Heart right ventricle (tissue), 16 donors: ENCODE measurements at regions of chr6 and their contacts with region 1.

Region 1: GRCh38 chr6:1761477-1761877 is 151.8 kb downstream of the FOXC1 start:
- DNase-seq: no peak
- ATAC-seq: no peak
- H3K4me3 ChIP-seq: no peak overlapping the region
- H3K27ac ChIP-seq: no peak overlapping the region
- H3K4me1 ChIP-seq: peaks cover 0 to 26% (median 11%) of the 10 kb centered on the region in 9 donors
- H3K27me3 ChIP-seq: no peaks in the 10 kb centered on the region
- CTCF ChIP-seq: no peak

Region 2: DNA sequence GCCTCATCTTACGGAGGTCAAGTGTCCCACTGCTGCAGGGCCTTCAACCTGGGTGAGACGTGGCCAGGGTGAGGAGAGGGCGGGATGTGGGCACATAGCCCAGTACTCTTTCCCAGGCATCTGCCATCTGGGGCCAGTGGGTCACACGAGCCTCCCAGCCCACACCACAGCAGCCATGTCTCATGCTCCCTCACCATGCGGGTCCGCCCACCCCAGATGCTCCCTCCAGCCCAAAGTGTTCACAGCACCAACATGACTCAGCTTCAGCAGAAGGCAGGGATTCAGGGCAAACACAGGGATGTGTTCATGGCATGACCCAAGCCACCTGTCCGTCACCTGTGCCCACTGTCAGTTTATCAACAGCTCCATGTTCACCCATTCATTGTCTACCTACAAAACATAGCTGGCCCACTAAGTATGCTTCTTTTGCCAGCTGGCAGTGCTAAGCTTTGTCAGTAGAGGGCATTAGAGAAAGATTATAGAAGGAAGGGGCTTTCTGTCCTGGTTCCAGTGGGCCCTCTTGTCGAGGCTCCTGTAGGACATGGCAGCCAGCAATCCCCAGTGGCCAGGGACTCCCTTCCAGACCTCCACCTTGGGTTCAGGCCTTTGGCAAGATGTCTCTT is 262.9 kb before region 1 on chr6:
- intact Hi-C with region 1: no loop called
- DNase-seq: no peak
- ATAC-seq: no peak
- H3K4me3 ChIP-seq: no peak overlapping the region
- H3K27ac ChIP-seq: no peak overlapping the region
- H3K4me1 ChIP-seq: peaks cover 0 to 9% (median 0%) of the 10 kb centered on the region in 9 donors
- H3K27me3 ChIP-seq: peaks cover 0 to 14% (median 0%) of the 10 kb centered on the region in 7 donors
- CTCF ChIP-seq: no peak

Region 3: GRCh38 chr6:1701668-1702353 is 59.7 kb before region 1 on chr6:
- intact Hi-C with region 1: loop called in 1 of 10 experiments (anchors 10 kb)
- DNase-seq: peak in 1 of 2 donors; percentile 31
- ATAC-seq: peak in 7 of 8 donors; percentile 24 to 76 (median 53)
- H3K4me3 ChIP-seq: no peak overlapping the region
- H3K27ac ChIP-seq: peak overlapping the region in 3 of 10 donors; percentile 29 to 62 (median 51)
- H3K4me1 ChIP-seq: peaks cover 0 to 30% (median 0%) of the 10 kb centered on the region in 9 donors
- H3K27me3 ChIP-seq: no peaks in the 10 kb centered on the region
- CTCF ChIP-seq: no peak

Region 4: DNA sequence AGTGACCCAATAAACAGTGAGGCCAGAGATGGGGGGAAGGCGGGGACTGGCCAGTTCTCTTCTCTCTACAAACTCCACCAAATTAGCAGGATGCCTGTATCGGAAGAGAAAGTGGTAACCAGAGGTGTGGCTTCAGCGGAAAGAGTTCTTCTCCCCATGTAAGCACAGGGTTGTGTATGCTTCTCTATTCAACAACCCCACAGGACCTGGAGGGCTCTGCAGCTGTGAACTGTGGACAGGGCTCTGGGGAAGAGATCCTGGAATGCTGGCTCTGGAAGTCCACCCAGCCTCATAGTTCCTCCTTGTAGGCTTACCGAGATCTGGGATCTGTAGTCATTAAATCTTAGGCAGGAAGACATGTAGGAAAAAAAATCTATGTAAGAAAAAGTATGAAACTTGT is 34.4 kb after region 1 on chr6:
- intact Hi-C with region 1: loop called in 2 of 10 experiments (anchors 2 to 5 kb)
- DNase-seq: no peak
- ATAC-seq: no peak
- H3K4me3 ChIP-seq: no peak overlapping the region
- H3K27ac ChIP-seq: no peak overlapping the region
- H3K4me1 ChIP-seq: peaks cover 0 to 17% (median 5%) of the 10 kb centered on the region in 9 donors
- H3K27me3 ChIP-seq: no peaks in the 10 kb centered on the region
- CTCF ChIP-seq: no peak

Region 5: DNA sequence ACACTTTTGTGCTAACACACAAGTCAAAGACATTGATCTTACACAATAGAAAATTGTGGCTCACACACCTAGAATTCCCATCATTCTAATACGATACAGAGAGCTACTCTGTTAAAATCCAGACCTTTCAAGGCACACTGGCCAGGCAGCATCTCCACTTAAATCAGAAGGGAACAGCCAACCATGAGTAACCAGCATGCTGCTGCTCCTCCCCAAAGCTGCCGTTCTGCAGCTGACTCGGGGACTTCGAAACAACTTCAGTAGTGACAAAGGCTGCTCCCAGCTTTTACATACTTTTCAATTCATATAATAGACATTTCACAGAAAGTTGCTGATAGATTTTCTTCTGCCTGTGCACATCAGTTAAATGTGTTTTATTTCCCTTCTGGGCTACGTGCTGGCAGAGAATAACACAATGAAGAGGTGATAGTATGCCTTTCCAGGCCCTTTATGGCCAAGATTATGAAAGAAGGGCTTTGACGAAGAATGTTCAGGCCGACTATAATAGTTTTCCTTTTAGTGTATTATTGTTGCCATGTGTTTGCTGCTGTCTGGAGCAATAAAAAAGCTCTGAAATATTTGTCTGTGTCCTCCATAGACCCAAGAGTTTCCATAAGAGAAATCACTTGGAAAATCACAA is 325.0 kb after region 1 on chr6:
- intact Hi-C with region 1: no loop called
- DNase-seq: no peak
- ATAC-seq: no peak
- H3K4me3 ChIP-seq: no peak overlapping the region
- H3K27ac ChIP-seq: no peak overlapping the region
- H3K4me1 ChIP-seq: no peaks in the 10 kb centered on the region
- H3K27me3 ChIP-seq: no peaks in the 10 kb centered on the region
- CTCF ChIP-seq: no peak